ENCODE measurements at regions of chr1 and their contacts with region 1.

Region 1: DNA sequence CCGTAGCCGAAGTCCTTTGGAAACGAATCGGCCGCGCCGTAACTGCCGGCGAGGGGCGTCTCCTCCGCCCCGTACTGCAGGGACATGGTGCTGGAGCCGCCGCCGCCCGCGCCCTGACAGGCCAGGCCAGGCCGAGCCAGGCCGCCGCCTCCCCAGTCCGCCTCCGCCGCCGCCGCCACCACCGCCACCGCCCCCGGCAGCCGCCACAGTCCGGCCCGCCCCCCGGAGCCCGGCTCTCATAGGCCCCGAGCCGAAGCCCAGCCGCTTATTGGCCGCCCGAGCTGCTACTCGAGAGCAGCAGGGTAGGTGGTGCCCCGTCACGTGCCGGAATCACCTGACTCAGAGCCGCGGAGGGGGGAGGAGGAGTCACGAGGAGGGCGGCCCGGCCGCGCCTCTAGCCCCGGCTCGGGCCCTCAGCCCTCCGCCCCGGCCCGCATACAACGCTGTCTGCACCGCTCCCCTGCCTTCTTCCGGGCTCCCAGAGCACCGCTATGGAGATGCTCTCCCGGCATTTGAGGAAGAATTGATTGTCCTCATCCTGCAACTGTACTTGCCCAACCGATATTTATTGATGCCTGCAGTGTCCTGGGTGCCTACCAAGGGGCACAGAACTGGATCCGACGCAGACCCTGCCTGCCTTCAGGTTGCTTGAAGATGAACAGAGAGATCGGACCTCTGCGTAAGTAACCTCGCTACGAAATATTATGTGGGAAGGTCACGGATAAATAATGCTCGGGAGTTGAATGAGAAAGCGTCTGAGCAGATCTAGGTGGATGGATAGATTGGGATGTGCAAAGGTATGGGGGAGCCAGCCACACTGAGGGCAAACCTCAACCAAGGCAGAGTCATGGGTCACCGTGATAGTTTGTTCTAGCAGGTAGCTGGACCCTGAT is at the start of gene RRAGC:
- DNase-seq: peak; percentile 100
- H3K4me3 ChIP-seq: peak within 1 kb of the TSS; percentile 77 to 78
- H3K27ac ChIP-seq: peak within 1 kb of the TSS; percentile 89 to 94
- H3K4me1 ChIP-seq: peaks cover 3% of the 10 kb centered on the region
- H3K27me3 ChIP-seq: no peaks in the 10 kb centered on the region
- CTCF ChIP-seq: peak in 1 of 4 experiments; percentile 5
- POLR2A ChIP-seq: peak; percentile 60
- total RNA-seq, gene RRAGC: 9.2 to 22.6 TPM

Region 2: GRCh38 chr1:38541223-38541622 is 318.6 kb before region 1 on chr1:
- intact Hi-C with region 1: no loop called
- DNase-seq: no peak
- H3K4me3 ChIP-seq: no peak overlapping the region
- H3K27ac ChIP-seq: no peak overlapping the region
- H3K4me1 ChIP-seq: no peaks in the 10 kb centered on the region
- H3K27me3 ChIP-seq: no peaks in the 10 kb centered on the region
- CTCF ChIP-seq: no peak
- POLR2A ChIP-seq: no peak

Region 3: DNA sequence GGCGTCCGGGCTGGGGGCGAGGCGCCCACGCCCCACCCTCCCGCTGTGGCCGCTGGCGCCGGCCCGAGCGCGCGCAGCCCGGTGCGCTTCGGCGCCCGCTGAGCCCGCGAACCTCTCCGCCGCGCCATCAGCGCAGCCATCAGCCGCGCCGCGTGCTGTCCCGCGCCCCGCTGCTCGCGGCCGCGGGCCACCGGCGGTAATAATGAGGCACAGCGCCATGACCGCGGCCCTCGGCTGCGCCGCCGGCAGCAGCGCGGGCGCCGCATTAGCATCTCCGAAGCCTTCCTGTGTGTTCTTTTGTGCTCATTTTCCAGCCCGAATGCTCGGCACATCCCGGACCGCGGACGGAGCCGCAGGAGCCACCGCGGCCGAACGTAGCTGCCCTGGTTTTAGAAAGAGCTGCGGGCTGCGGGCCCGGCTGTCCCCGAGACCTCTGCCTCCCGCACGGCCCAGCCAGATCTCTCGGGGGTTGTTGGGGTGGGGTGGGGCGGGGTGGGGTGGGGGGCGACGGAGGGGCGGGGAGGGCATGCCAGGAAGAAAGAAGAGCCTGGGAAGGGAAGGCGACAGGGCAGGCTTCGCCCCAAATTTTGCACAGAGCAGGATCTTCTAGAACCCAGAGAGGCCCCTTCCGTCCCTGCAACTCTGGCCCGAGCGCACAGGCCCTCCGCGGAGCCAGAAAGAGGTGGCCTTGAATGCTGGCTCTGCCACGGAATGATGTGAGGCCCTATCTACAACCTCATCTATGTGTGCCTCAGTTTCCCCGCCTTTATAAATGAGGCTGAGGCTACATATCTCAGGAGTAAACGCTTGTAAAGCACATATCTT is 55.5 kb before region 1 on chr1:
- intact Hi-C with region 1: no loop called
- DNase-seq: no peak
- H3K4me3 ChIP-seq: peak overlapping the region in 1 of 2 donors; percentile 20
- H3K27ac ChIP-seq: no peak overlapping the region
- H3K4me1 ChIP-seq: no peaks in the 10 kb centered on the region
- H3K27me3 ChIP-seq: peaks cover 4% of the 10 kb centered on the region
- CTCF ChIP-seq: no peak
- POLR2A ChIP-seq: no peak

Region 4: GRCh38 chr1:38990738-38991639 is 131.2 kb after region 1 on chr1 and contains the start of gene AKIRIN1:
- intact Hi-C with region 1: loop called (anchors 5 kb)
- DNase-seq: peak; percentile 97
- H3K4me3 ChIP-seq: peak within 1 kb of the TSS; percentile 99 to 100
- H3K27ac ChIP-seq: peak within 1 kb of the TSS; percentile 90 to 95
- H3K4me1 ChIP-seq: peaks cover 6% of the 10 kb centered on the region
- H3K27me3 ChIP-seq: no peaks in the 10 kb centered on the region
- CTCF ChIP-seq: peak in 3 of 4 experiments; percentile 30 to 60 (median 32)
- POLR2A ChIP-seq: peak; percentile 96
- total RNA-seq, gene AKIRIN1: 55.7 to 108 TPM

Region 5: GRCh38 chr1:39086865-39087409 is 227.1 kb after region 1 on chr1:
- intact Hi-C with region 1: loop called (anchors 5 kb)
- DNase-seq: no peak
- H3K4me3 ChIP-seq: no peak overlapping the region
- H3K27ac ChIP-seq: no peak overlapping the region
- H3K4me1 ChIP-seq: no peaks in the 10 kb centered on the region
- H3K27me3 ChIP-seq: no peaks in the 10 kb centered on the region
- CTCF ChIP-seq: no peak
- POLR2A ChIP-seq: no peak

Region 6: GRCh38 chr1:39538588-39539465 is 679.0 kb after region 1 on chr1:
- intact Hi-C with region 1: loop called (anchors 10 kb)
- DNase-seq: peak; percentile 68
- H3K4me3 ChIP-seq: no peak overlapping the region
- H3K27ac ChIP-seq: no peak overlapping the region
- H3K4me1 ChIP-seq: no peaks in the 10 kb centered on the region
- H3K27me3 ChIP-seq: no peaks in the 10 kb centered on the region
- CTCF ChIP-seq: peak; percentile 75 to 94 (median 88)
- POLR2A ChIP-seq: no peak